ENCODE measurements at regions of chr16 and their contacts with region 1.

Region 1: GRCh38 chr16:67183627-67184328 is at the start of gene MATCAP1:
- DNase-seq: peak; percentile 97
- H3K4me3 Mint-ChIP-seq: peak within 1 kb of the TSS; percentile 50
- H3K27ac Mint-ChIP-seq: no peak within 1 kb of the TSS
- H3K4me1 Mint-ChIP-seq: peaks cover 12% of the 10 kb centered on the region
- H3K27me3 Mint-ChIP-seq: peaks cover 17% of the 10 kb centered on the region
- total RNA-seq, gene MATCAP1: 21.9 to 24.0 TPM

Region 2: DNA sequence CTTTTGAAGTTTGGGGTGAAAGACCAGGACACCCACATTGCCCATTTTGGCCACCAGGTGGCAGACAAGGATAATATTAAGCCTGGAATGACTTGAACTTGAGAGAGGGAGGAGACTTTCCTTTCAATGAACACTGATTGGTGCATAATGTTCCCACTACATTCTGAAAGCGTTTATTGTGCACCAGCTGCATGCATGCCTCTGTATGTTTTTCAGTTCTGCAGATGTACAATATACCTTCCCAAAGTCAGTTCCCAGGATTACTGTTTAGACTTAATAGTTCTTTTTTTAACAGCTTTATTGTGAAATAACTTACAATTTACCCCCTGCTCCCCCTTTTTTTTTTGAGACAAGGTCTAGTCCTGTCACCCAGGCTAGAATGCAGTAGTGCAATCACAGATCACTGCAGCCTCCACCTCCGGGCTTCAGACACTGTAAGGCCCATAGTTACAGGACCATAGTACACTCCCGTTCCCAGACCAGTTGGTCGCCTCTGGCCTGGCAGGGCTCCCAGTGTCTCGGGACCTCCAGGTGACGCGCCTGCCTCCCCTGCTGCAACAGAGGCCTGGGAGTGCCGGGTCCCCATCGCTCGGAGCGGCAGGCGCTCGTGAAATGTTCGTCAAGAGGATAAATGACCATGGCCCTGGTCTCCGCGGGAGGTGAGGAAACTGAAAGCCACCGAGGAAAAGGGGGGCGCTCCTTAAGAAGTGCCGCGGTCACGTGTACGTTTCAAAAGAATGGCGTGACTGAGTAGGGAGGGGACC is 236.3 kb before region 1 on chr16:
- CTCF ChIA-PET with region 1: interaction called, 3 read pairs
- intact Hi-C with region 1: loop called (anchors 1 kb)
- DNase-seq: peak; percentile 95
- H3K4me3 Mint-ChIP-seq: peak overlapping the region; percentile 81
- H3K27ac Mint-ChIP-seq: no peak overlapping the region
- H3K4me1 Mint-ChIP-seq: peaks cover 17% of the 10 kb centered on the region
- H3K27me3 Mint-ChIP-seq: peaks cover 34% of the 10 kb centered on the region

Region 3: DNA sequence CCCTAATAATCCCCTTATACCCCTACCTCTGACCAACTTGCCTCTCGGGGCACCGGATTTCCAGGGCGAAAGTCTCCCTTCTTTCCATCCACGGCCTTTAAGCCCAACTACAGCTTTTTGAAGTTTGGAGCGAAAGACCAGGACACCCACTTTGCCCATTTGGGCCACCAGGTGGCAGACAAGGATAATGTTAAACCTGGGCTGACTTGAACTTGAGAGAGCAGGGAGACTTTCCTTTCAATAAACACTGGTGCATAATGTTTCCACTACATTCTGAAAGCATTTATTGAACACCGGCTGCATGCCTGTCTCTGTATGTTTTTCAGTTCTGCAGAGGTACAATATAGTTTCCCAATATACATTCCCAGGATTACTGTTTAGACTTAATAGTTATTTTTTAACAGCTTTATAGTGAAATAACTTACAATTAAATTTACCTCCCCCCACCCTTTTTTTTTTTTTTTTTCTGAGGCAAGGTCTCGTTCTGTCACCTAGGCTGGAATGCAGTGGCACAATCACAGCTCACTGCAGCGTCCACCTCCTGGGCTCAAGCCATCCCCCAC is 229.6 kb before region 1 on chr16:
- CTCF ChIA-PET with region 1: interaction called, 6 read pairs
- intact Hi-C with region 1: loop called (anchors 1 kb)
- DNase-seq: peak; percentile 90
- H3K4me3 Mint-ChIP-seq: no peak overlapping the region
- H3K27ac Mint-ChIP-seq: no peak overlapping the region
- H3K4me1 Mint-ChIP-seq: peaks cover 14% of the 10 kb centered on the region
- H3K27me3 Mint-ChIP-seq: peaks cover 27% of the 10 kb centered on the region

Region 4: GRCh38 chr16:66977341-66978113 is 206.3 kb before region 1 on chr16:
- CTCF ChIA-PET with region 1: interaction called, 8 read pairs
- intact Hi-C with region 1: loop called (anchors 1 kb)
- DNase-seq: peak; percentile 94
- H3K4me3 Mint-ChIP-seq: no peak overlapping the region
- H3K27ac Mint-ChIP-seq: no peak overlapping the region
- H3K4me1 Mint-ChIP-seq: peaks cover 23% of the 10 kb centered on the region
- H3K27me3 Mint-ChIP-seq: no peaks in the 10 kb centered on the region

Region 5: GRCh38 chr16:66984892-66985311 is 198.9 kb before region 1 on chr16:
- CTCF ChIA-PET with region 1: interaction called, 3 read pairs
- intact Hi-C with region 1: loop called (anchors 2 kb)
- DNase-seq: peak; percentile 81
- H3K4me3 Mint-ChIP-seq: no peak overlapping the region
- H3K27ac Mint-ChIP-seq: peak overlapping the region; percentile 96
- H3K4me1 Mint-ChIP-seq: peaks cover 30% of the 10 kb centered on the region
- H3K27me3 Mint-ChIP-seq: no peaks in the 10 kb centered on the region

Region 6: DNA sequence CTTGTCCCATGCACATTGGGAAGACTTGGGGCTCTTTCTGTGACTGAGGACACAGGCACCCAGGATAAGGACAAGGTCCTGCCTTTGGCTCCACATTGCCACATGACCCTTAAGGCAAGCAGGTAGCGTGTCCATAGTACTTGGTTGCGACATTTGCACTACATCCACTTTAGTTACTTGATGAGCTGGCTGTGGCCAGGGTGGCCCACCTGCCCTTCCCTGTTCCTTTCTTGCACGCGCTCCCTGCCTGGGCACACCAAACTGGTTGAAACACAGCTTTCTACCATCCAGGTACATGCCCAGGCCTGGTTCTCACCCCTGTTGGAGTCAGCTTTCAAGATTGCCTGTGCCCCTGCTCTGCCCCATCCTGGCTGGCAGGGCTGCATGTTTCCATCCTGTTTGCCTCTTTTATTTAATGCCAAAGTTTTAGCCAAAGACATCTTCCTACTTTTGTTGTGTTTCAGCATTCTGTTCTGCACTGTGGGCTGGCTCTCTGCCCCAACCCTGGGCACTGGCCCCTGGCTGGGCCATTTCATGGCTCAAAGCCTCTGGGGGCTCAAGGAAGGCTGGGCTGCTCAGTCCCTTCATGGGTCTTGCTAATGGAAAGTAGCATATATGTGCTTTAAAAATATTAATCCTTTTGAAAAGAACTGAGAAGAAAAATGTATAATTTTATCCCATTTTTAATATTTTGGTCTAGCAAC is 36.2 kb before region 1 on chr16:
- CTCF ChIA-PET with region 1: no interaction called
- intact Hi-C with region 1: no loop called
- DNase-seq: no peak
- H3K4me3 Mint-ChIP-seq: no peak overlapping the region
- H3K27ac Mint-ChIP-seq: no peak overlapping the region
- H3K4me1 Mint-ChIP-seq: peaks cover 5% of the 10 kb centered on the region
- H3K27me3 Mint-ChIP-seq: peaks cover 3% of the 10 kb centered on the region

Region 7: DNA sequence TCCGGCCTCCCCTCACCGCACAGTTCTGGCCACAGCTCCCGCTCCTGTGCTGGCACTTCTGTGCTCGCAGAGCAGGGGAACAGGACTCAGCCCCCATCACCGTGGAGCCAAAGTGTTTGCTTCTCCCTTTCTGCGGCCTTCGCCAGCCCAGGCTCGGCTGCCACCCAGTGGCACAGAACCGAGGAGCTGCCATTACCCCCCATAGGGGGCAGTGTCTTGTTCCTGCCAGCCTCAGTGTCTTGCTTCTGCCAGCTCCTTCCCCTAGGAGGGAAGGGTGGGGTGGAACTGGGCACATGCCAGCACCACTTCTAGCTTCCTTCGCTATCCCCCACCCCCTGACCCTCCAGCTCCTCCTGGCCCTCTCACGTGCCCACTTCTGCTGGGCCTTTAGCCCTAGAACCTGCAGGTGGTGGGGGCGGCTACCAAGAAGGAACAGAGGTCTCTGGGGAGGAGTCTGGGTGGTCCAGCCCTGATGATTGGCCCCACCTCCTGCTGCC is 14.5 kb after region 1 on chr16:
- CTCF ChIA-PET with region 1: interaction called, 10 read pairs
- intact Hi-C with region 1: no loop called
- DNase-seq: peak; percentile 33
- H3K4me3 Mint-ChIP-seq: no peak overlapping the region
- H3K27ac Mint-ChIP-seq: no peak overlapping the region
- H3K4me1 Mint-ChIP-seq: peaks cover 29% of the 10 kb centered on the region
- H3K27me3 Mint-ChIP-seq: no peaks in the 10 kb centered on the region

Region 8: GRCh38 chr16:67226804-67227557 is 43.2 kb after region 1 on chr16 and contains the start of gene TMEM208:
- CTCF ChIA-PET with region 1: interaction called, 5 read pairs
- intact Hi-C with region 1: loop called (anchors 2 kb)
- DNase-seq: peak; percentile 99
- H3K4me3 Mint-ChIP-seq: peak within 1 kb of the TSS; percentile 100
- H3K27ac Mint-ChIP-seq: peak within 1 kb of the TSS; percentile 96
- H3K4me1 Mint-ChIP-seq: peaks cover 51% of the 10 kb centered on the region
- H3K27me3 Mint-ChIP-seq: no peaks in the 10 kb centered on the region
- total RNA-seq, gene TMEM208: 24.6 to 29.4 TPM

Region 9: DNA sequence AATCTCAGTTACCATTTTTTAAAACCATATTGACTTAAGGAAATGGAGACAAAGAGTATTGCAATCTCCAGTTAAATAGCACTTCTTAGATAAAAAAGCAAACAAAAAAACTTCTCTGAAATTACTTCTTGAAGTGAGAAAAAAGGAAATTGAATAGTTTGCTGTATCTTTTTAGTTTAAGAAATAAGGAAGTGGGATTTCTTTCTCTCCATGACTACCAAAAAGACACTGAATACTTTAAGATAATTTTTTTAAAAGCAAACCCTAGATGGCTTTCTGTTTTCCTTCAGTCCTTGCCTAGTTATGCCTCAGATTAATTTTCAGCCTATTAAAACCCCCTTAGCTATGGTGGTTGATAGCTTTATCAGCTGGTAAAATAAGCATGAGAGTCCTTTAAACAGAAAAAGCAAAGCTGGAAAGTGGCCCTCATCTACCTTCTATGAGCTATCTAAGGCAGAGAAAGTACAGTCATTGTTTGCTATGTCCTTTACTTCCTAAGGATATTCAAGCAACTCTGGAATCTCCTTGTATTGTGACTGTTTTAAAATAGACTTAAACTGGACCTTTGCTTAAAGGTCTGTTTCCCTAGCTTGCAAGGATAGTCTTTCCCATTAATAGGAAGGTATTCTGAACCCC is 180.9 kb after region 1 on chr16:
- CTCF ChIA-PET with region 1: no interaction called
- intact Hi-C with region 1: no loop called
- DNase-seq: no peak
- H3K4me3 Mint-ChIP-seq: no peak overlapping the region
- H3K27ac Mint-ChIP-seq: no peak overlapping the region
- H3K4me1 Mint-ChIP-seq: peaks cover 10% of the 10 kb centered on the region
- H3K27me3 Mint-ChIP-seq: no peaks in the 10 kb centered on the region

Measured in activated naive CD4-positive, alpha-beta T cell treated with anti-CD3 and anti-CD28 coated beads for 36 hours (primary cell).